ENCODE measurements at regions of chr10 and their contacts with region 1.

Region 1: GRCh38 chr10:5666008-5666829 is at the start of gene ASB13:
- DNase-seq: peak; percentile 54
- ATAC-seq: peak; percentile 90
- H3K4me3 ChIP-seq: peak within 1 kb of the TSS; percentile 73 to 98 (median 96)
- H3K27ac ChIP-seq: peak within 1 kb of the TSS; percentile 76
- H3K4me1 ChIP-seq: peaks cover 57% of the 10 kb centered on the region
- H3K27me3 ChIP-seq: peaks cover 0 to 9% of the 10 kb centered on the region in 2 experiments; a peak in 1 of 5 replicates
- CTCF ChIP-seq: peak; percentile 50
- EP300 ChIP-seq: no peak
- POLR2A ChIP-seq: peak; percentile 46 to 60; a peak in 2 of 4 replicates
- RAD21 ChIP-seq: peak; percentile 18; the same call in 1 of the 2 replicates
- total RNA-seq, gene ASB13: 15.4 and 17.5 TPM in 2 replicates

Region 2: DNA sequence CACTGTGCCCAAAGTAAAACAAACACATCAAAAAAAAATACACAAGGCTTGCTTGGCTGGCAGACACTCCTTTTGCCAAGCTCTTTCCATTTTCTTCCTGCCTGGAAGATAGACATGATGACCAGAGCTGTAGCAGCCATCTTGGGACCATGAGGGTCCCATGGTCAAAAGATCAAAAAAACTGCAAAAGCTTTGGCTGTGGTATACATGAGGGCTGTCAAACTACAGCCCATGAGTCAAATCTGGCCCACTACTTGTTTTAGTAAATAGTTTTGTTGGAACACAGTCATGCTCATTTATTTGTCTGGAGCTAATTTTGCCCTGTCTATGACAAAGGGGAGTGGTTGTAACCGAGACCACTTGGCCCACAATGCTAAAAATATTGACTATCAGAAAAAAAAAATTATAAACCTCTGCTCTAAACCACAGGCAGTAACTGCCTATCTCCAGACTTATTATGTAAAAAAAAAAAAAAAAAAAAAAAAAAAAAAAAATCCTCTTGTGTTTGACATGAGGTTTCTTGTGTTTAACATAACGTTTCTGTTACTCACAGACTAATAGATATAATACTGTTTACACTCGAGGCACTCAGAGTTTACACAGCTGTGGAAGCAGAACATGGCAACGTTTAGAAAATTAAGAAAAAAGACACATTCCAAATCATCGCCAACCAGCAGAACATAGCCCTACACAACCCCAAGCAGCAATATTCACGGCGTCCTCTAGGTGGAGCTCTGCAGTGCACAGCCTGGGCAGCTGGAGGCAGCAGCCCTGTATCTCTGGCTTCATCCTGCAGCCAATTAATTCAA is 36.7 kb before region 1 on chr10:
- CTCF ChIA-PET with region 1: no interaction called
- POLR2A ChIA-PET with region 1: interaction called, 3 read pairs
- in situ Hi-C with region 1: no loop called
- intact Hi-C with region 1: loop called (anchors 5 kb)
- DNase-seq: peak; percentile 61
- ATAC-seq: peak; percentile 69
- H3K4me3 ChIP-seq: peak overlapping the region in 1 of 3 experiments; percentile 1; a peak in 1 of 6 replicates
- H3K27ac ChIP-seq: no peak overlapping the region
- H3K4me1 ChIP-seq: peaks cover 68% of the 10 kb centered on the region
- H3K27me3 ChIP-seq: no peaks in the 10 kb centered on the region; a peak in 1 of 5 replicates
- CTCF ChIP-seq: peak; percentile 86
- EP300 ChIP-seq: no peak
- POLR2A ChIP-seq: no peak
- RAD21 ChIP-seq: peak; percentile 58

Measured in HepG2 (cell line).